Prostate gland (tissue), 2 donors: ENCODE measurements at regions of chr12 and their contacts with region 1.

Region 1: GRCh38 chr12:120640840-120641833 is 711 bp downstream of the CABP1 start:
- DNase-seq: peak; percentile 22
- H3K4me3 ChIP-seq: peak overlapping the region; percentile 29 to 41
- H3K27ac ChIP-seq: no peak overlapping the region
- H3K4me1 ChIP-seq: no peaks in the 10 kb centered on the region
- H3K27me3 ChIP-seq: no peaks in the 10 kb centered on the region
- CTCF ChIP-seq: no peak
- POLR2A ChIP-seq: no peak

Region 2: GRCh38 chr12:120445911-120446843 is 195.0 kb before region 1 on chr12 and contains the starts of genes GATC and TRIAP1:
- intact Hi-C with region 1: loop called (anchors 10 kb)
- DNase-seq: peak; percentile 81
- H3K4me3 ChIP-seq: peak within 1 kb of the TSS; percentile 76 to 81
- H3K27ac ChIP-seq: peak within 1 kb of the TSS; percentile 82 to 89
- H3K4me1 ChIP-seq: peaks cover 6% of the 10 kb centered on the region
- H3K27me3 ChIP-seq: no peaks in the 10 kb centered on the region
- CTCF ChIP-seq: peak in 2 of 4 experiments; percentile 31 to 43
- POLR2A ChIP-seq: peak; percentile 58
- total RNA-seq, gene GATC: 19.3 to 30.1 TPM
- total RNA-seq, gene TRIAP1: 15.7 to 21.9 TPM

Region 3: GRCh38 chr12:120598674-120599463 is 42.3 kb before region 1 on chr12:
- intact Hi-C with region 1: no loop called
- DNase-seq: no peak
- H3K4me3 ChIP-seq: no peak overlapping the region
- H3K27ac ChIP-seq: no peak overlapping the region
- H3K4me1 ChIP-seq: no peaks in the 10 kb centered on the region
- H3K27me3 ChIP-seq: peaks cover 2% of the 10 kb centered on the region
- CTCF ChIP-seq: no peak
- POLR2A ChIP-seq: no peak

Region 4: GRCh38 chr12:120775862-120776552 is 134.9 kb after region 1 on chr12:
- intact Hi-C with region 1: no loop called
- DNase-seq: no peak
- H3K4me3 ChIP-seq: no peak overlapping the region
- H3K27ac ChIP-seq: no peak overlapping the region
- H3K4me1 ChIP-seq: no peaks in the 10 kb centered on the region
- H3K27me3 ChIP-seq: no peaks in the 10 kb centered on the region
- CTCF ChIP-seq: peak in 1 of 4 experiments; percentile 13
- POLR2A ChIP-seq: no peak

Region 5: DNA sequence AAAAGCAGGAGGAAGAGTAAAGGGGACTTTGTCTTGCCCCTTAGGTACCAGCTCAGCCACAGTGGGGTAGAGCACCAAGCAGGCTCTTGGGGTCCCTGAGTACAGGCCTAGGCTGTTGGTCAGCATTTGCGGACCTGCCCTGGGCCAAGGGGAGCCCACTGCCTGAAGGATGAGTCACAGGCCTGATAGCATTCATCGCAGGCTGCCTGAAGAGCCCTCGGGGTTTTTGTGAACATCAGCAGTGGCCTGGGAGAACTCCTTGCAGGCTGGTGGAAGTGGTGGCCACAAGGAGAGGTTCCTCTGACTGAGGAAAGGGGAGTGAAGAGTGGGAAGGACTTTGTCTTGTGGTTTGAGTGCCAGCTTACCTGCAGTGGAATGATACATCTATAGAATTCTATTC is 466.6 kb after region 1 on chr12:
- intact Hi-C with region 1: loop called (anchors 10 kb)
- DNase-seq: no peak
- H3K4me3 ChIP-seq: no peak overlapping the region
- H3K27ac ChIP-seq: no peak overlapping the region
- H3K4me1 ChIP-seq: no peaks in the 10 kb centered on the region
- H3K27me3 ChIP-seq: no peaks in the 10 kb centered on the region
- CTCF ChIP-seq: no peak
- POLR2A ChIP-seq: no peak